ENCODE measurements at regions of chr2 and their contacts with region 1.

Region 1: DNA sequence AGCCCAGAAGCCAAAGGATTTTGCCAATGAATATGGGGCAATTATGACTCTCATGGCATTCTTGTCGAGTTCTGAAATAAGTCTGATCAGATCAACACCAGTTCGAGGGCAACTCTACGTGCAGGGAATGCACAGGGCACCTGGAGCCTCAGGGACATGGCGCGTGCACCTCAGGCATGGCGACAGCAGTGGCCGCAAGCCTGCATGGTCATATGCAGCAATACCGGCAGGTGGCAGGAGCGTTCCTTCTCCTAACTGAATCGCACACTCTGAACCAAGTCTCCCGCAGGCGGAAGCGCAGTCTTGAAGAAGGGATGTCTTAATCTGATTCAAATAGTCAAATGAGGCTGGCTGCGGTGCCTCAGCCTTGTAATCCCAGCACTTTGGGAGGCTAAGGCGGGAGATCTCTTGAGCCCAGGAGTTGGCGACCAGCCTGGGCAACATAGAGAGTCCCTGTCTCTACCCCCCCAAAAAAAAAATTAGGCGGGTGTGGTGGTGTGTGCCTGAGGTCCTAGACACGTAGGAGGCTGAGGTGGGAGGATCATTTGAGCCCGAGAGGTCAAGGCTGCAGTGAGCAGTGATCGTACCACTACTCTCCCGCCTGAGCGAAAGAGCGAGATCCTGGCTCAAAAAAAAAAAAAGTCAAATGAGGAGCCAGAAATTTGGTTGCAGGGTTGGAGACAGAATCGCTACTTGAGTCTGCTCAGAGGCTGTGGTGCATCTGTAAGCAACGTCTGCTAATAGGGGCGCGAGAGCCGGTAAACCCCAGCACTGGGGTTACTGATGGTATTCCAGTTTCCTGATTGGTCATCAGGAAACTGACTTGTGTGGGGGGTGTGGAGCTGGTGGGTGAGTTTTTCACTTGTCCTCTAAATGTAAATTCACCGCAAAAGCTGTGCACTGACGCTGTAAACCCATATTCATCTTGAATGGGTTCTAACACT is 28.8 kb downstream of the FHL2 start:
- DNase-seq: peak; percentile 62 to 90 (median 72)
- ATAC-seq: peak; percentile 99
- H3K4me3 ChIP-seq: no peak overlapping the region
- H3K27ac ChIP-seq: no peak overlapping the region
- H3K4me1 ChIP-seq: peaks cover 0 to 4% of the 10 kb centered on the region in 2 experiments; a peak in 2 of 5 replicates
- H3K27me3 ChIP-seq: no peaks in the 10 kb centered on the region
- CTCF ChIP-seq: peak; percentile 96
- EP300 ChIP-seq: no peak
- POLR2A ChIP-seq: no peak
- RAD21 ChIP-seq: peak; percentile 97

Region 2: DNA sequence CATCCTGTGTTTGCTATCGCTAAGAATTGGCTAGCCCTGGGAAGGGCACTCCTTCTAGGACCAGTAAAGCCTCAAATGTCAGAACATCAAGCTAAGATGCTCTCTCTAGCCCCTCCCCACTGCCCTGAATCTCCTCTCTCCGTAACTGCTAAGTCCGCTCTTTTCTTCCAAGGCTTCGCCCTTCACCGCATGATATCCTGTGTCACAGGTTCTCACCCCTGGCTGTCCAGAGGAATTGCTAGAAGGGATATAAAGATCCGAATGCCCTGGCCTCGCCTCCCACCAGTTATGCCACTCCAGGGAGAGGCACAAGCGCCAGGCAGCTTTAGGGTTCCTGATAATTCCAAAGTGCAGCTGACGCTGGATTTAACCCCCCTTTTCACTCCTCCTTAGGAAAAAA is 145.6 kb before region 1 on chr2:
- CTCF ChIA-PET with region 1: no interaction called
- POLR2A ChIA-PET with region 1: no interaction called
- in situ Hi-C with region 1: no loop called
- intact Hi-C with region 1: no loop called
- DNase-seq: no peak
- ATAC-seq: no peak
- H3K4me3 ChIP-seq: no peak overlapping the region
- H3K27ac ChIP-seq: no peak overlapping the region
- H3K4me1 ChIP-seq: no peaks in the 10 kb centered on the region
- H3K27me3 ChIP-seq: peaks cover 30 to 42% of the 10 kb centered on the region in 2 experiments
- CTCF ChIP-seq: no peak
- EP300 ChIP-seq: no peak
- POLR2A ChIP-seq: no peak
- RAD21 ChIP-seq: no peak

Region 3: GRCh38 chr2:105454801-105455485 is 84.9 kb after region 1 on chr2:
- CTCF ChIA-PET with region 1: interaction called, 3 read pairs
- POLR2A ChIA-PET with region 1: no interaction called
- in situ Hi-C with region 1: no loop called
- intact Hi-C with region 1: loop called (anchors 5 kb)
- DNase-seq: peak; percentile 37 to 74 (median 51)
- ATAC-seq: peak; percentile 94
- H3K4me3 ChIP-seq: no peak overlapping the region
- H3K27ac ChIP-seq: no peak overlapping the region
- H3K4me1 ChIP-seq: peaks cover 0 to 17% of the 10 kb centered on the region in 2 experiments; a peak in 2 of 5 replicates
- H3K27me3 ChIP-seq: no peaks in the 10 kb centered on the region
- CTCF ChIP-seq: peak; percentile 69 to 81 (median 78)
- EP300 ChIP-seq: peak; percentile 22; the same call in 1 of the 2 replicates
- POLR2A ChIP-seq: no peak
- RAD21 ChIP-seq: peak; percentile 80 to 81

Region 4: DNA sequence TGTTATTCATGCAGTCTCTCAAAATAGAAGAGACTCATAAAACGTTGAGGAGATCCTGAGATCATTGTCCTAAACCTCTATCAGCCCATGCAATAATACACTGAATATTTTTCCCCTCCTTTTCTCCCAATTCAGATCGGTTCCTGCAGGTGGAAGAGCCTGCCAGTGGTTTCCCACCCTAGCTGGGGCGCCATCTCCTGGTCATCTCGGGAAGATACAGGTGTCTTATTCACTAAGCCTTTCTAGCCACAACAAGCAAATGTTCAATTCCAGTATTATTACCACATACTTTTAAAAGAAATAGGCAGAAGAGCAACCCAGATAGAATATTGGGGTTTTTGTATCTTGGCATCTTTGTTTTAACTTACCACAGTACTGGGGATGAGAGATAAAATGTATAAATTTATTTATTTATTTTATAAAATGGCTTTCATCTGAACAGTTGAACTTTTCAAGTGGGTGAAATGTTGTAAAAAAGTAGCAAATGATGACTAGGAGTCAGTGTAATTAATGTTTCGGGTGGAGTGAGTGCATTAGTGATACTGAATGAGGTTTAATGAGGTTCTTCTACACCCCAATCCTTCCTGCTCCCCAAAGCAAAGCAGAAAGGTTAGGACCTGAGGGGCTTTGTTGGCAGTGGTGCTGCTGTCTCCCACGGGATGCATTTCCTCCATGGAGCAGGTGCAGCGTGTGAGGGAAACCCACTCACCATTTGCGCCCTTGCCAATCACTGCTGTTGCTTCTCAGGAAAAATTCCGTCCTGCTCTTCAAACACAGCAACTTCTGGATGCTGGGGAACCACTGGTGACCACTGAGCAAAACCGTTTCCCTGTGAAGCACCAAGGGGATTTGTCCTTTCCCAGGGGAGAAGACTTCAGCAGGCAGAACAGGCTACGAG is 176.0 kb after region 1 on chr2:
- CTCF ChIA-PET with region 1: interaction called, 11 read pairs
- POLR2A ChIA-PET with region 1: no interaction called
- in situ Hi-C with region 1: no loop called
- intact Hi-C with region 1: no loop called
- DNase-seq: peak; percentile 77 to 80 (median 80)
- ATAC-seq: peak; percentile 96
- H3K4me3 ChIP-seq: no peak overlapping the region
- H3K27ac ChIP-seq: no peak overlapping the region
- H3K4me1 ChIP-seq: no peaks in the 10 kb centered on the region
- H3K27me3 ChIP-seq: peaks cover 25 to 51% of the 10 kb centered on the region in 2 experiments
- CTCF ChIP-seq: peak; percentile 82 to 97 (median 87)
- EP300 ChIP-seq: no peak
- POLR2A ChIP-seq: no peak
- RAD21 ChIP-seq: peak; percentile 67 to 79

Region 5: GRCh38 chr2:105789745-105790460 is 419.9 kb after region 1 on chr2:
- CTCF ChIA-PET with region 1: no interaction called
- POLR2A ChIA-PET with region 1: no interaction called
- in situ Hi-C with region 1: no loop called
- intact Hi-C with region 1: no loop called
- DNase-seq: no peak
- ATAC-seq: no peak
- H3K4me3 ChIP-seq: no peak overlapping the region
- H3K27ac ChIP-seq: no peak overlapping the region
- H3K4me1 ChIP-seq: peaks cover 20 to 31% of the 10 kb centered on the region in 2 experiments
- H3K27me3 ChIP-seq: no peaks in the 10 kb centered on the region
- CTCF ChIP-seq: peak; percentile 1 to 39 (median 23); a peak in 3 of 6 replicates
- EP300 ChIP-seq: no peak
- POLR2A ChIP-seq: no peak
- RAD21 ChIP-seq: peak in 1 of 2 experiments; percentile 22; a peak in 2 of 4 replicates

Measured in K562 (cell line).